AG04449 (cell line): ENCODE measurements at regions of chr2 and their contacts with region 1.

Region 1: DNA sequence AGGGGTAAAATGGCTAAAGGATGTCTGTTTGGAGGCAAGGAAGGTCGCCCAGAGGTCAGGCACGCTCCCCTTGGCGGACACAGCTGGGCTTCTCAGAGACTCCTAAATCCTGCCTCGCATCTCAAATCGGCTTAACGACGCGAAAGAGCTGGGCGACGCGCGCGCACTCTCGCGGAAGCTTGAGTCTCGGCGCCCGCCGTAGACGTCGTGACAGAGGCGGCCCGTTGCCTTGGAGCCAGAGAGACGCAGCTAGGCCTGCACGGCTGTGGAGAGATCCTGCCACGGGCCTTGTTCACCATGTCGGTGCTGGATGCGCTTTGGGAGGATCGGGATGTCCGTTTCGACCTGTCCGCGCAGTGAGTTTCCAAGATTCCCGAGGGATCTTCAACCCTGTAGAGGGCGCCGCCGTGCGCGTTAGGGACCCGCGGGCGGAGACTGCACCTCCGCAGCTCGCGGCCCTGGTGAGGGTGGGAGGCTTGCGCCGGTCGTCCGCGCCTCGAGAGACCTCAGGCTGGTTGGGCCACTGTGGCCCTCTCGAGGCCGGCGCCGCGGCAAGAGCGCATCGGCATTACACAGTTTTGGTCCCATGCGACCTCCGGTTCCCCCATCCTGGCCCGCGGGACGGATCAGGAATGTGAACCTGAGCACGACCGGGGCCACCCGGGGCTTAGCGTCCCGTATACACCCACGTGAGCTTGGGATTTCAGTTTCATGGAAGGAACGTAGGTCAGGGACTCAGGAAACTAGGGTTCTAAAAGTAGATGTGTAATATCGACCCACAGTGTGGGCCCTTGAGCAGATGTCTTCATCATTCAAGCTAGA is at the start of gene BBS5:
- DNase-seq: peak; percentile 41
- H3K4me3 ChIP-seq: peak within 1 kb of the TSS; percentile 81
- CTCF ChIP-seq: peak; percentile 47

Region 2: DNA sequence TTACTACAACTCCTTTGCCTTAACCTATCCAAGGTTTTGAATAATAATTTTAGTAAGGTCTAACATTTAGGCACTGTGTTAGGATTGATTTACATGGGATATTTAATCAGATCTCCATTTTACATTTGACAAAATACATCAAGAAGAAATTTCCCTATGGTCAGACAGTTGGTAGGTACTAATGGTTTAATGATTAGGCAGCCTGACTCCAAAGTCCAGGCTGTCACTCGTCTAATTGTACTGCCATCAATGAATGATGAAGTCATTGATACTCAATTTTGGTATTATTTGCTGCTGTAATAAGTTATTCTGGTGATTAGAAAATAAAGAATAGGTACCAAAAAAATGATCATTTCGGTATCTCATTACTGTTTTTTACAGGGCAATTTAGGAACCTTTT is 13.9 kb after region 1 on chr2:
- CTCF ChIA-PET with region 1: interaction called, 20 read pairs
- POLR2A ChIA-PET with region 1: no interaction called
- DNase-seq: no peak
- H3K4me3 ChIP-seq: no peak overlapping the region
- CTCF ChIP-seq: no peak

Region 3: GRCh38 chr2:169590804-169591203 is 111.3 kb after region 1 on chr2:
- CTCF ChIA-PET with region 1: no interaction called
- POLR2A ChIA-PET with region 1: no interaction called
- DNase-seq: no peak
- H3K4me3 ChIP-seq: no peak overlapping the region
- CTCF ChIP-seq: no peak